CD4-positive, alpha-beta T cell (primary cell): ENCODE measurements at regions of chr22 and their contacts with region 1.

Region 1: GRCh38 chr22:50341977-50342650 is 1.0 kb upstream of the PPP6R2 start:
- DNase-seq: peak; percentile 80 to 94 (median 87)
- ATAC-seq: peak; percentile 53
- H3K4me3 ChIP-seq: peak overlapping the region; percentile 62
- H3K4me3 Mint-ChIP-seq: peak overlapping the region; percentile 88
- H3K27ac ChIP-seq: peak overlapping the region; percentile 84 to 85
- H3K27ac Mint-ChIP-seq: peak overlapping the region; percentile 98
- H3K4me1 ChIP-seq: peaks cover 27% of the 10 kb centered on the region
- H3K4me1 Mint-ChIP-seq: peaks cover 7% of the 10 kb centered on the region
- H3K27me3 ChIP-seq: no peaks in the 10 kb centered on the region
- H3K27me3 Mint-ChIP-seq: no peaks in the 10 kb centered on the region
- CTCF ChIP-seq: peak; percentile 95

Region 2: DNA sequence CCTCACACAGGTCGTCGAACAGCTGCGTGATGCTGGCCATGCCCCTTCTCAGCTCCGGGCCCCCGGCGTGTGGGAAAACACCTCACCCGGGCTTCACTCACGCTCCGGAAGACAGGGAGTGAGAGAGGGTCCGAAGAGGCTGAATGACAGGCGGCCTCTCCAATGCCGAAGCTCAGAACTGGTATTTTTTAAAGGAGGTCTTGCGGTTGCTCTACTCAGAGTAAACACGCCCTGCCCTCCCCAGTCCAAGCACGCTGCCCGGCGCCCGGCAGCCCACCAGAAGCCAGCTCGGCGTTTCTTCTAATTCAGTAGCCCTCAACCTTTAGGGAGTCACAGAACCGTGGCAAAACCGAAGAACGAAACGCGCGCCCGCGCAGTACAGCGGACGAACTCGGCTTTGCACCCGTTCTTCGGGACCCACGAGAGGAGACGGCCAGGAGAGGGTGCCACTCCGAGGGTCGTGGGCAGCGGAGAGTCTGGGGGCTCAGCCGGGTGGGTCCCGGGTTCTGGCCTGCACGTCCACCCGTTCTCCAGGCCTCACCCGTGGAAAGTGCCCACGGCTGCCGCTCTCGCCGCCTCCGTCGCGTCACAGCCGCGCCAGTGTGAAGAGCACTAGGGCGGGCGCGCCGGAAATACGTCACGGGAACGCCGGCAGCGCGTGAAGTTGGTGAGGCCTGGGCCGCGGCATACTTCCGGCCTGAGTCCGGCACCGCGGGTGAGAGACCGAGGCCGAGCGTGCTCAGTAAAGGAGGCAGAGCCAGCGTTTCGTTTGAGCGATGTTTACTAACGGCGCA is 97.5 kb before region 1 on chr22 and contains the start of gene TUBGCP6:
- CTCF ChIA-PET with region 1: interaction called, 16 read pairs
- POLR2A ChIA-PET with region 1: interaction called, 9 read pairs
- intact Hi-C with region 1: loop called in 1 of 2 experiments (anchors 1 kb)
- DNase-seq: peak; percentile 76 to 97 (median 90)
- ATAC-seq: peak; percentile 73
- H3K4me3 ChIP-seq: peak within 1 kb of the TSS; percentile 100
- H3K4me3 Mint-ChIP-seq: peak within 1 kb of the TSS; percentile 99
- H3K27ac ChIP-seq: peak within 1 kb of the TSS; percentile 98
- H3K27ac Mint-ChIP-seq: peak within 1 kb of the TSS; percentile 89
- H3K4me1 ChIP-seq: peaks cover 92% of the 10 kb centered on the region
- H3K4me1 Mint-ChIP-seq: peaks cover 47% of the 10 kb centered on the region
- H3K27me3 ChIP-seq: no peaks in the 10 kb centered on the region
- H3K27me3 Mint-ChIP-seq: no peaks in the 10 kb centered on the region
- CTCF ChIP-seq: peak; percentile 33
- total RNA-seq, gene TUBGCP6: 124 to 126 TPM

Region 3: DNA sequence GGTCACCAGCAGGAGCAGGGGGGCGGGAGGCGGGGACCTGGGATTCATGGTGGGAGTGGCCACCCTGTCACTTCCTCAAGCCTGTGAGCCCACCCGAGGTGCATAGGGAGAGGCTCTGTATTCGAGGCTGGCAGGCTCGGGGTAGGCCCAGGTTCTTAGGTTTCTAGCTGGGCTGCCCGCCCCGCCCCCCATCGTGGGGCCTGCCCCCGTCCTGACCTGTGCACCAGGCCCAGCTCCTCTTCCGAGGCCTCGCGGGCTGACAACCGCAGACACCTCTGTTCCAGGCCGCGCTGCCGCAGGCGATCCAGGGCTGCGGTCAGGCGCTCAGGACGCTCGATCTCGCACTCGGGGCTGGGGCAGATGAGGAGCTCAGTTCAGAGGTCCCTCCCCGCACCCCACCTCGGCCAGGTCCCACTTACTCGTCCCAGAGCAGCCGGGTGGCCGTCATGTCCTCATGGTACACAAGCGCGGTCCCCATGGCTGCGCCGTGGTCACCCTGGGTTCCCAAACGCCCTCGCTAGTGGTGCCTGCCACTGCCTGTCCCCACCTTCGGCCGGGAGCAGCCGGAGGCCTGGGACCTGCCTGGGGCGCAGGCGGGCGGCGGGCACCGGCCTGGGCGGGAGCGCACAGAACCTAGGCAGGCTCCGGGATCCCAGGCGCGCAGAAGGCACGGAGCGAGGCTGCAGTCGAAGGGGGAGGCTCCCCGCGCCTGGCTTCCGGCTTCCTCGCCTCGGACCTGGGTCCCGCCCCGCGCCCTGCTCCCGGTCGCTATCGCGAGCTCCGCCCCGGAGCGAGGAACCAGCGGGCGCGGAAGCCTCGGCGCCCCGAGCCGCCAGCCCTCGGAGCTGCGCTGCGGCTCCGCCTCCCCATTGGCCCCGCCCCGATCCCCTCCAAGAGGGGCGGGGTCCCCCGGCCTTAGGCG is 91.3 kb before region 1 on chr22 and contains the start of gene HDAC10:
- CTCF ChIA-PET with region 1: interaction called, 16 read pairs
- POLR2A ChIA-PET with region 1: interaction called, 12 read pairs
- intact Hi-C with region 1: loop called in 1 of 2 experiments (anchors 2 kb)
- DNase-seq: peak; percentile 60 to 91 (median 77)
- ATAC-seq: peak; percentile 79
- H3K4me3 ChIP-seq: peak within 1 kb of the TSS; percentile 87
- H3K4me3 Mint-ChIP-seq: peak within 1 kb of the TSS; percentile 84
- H3K27ac ChIP-seq: peak within 1 kb of the TSS in 1 of 2 donors; percentile 53
- H3K27ac Mint-ChIP-seq: peak within 1 kb of the TSS; percentile 55
- H3K4me1 ChIP-seq: peaks cover 57% of the 10 kb centered on the region
- H3K4me1 Mint-ChIP-seq: peaks cover 26% of the 10 kb centered on the region
- H3K27me3 ChIP-seq: no peaks in the 10 kb centered on the region
- H3K27me3 Mint-ChIP-seq: no peaks in the 10 kb centered on the region
- CTCF ChIP-seq: no peak
- total RNA-seq, gene HDAC10: 87.3 to 88.7 TPM

Region 4: GRCh38 chr22:50326959-50327710 is 15.0 kb before region 1 on chr22 and contains the start of gene DENND6B:
- CTCF ChIA-PET with region 1: interaction called, 18 read pairs
- POLR2A ChIA-PET with region 1: interaction called, 6 read pairs
- intact Hi-C with region 1: loop called in 1 of 2 experiments (anchors 2 kb)
- DNase-seq: peak; percentile 38 to 90 (median 62)
- ATAC-seq: peak; percentile 94
- H3K4me3 ChIP-seq: peak within 1 kb of the TSS; percentile 60
- H3K4me3 Mint-ChIP-seq: peak within 1 kb of the TSS; percentile 89
- H3K27ac ChIP-seq: no peak within 1 kb of the TSS
- H3K27ac Mint-ChIP-seq: peak within 1 kb of the TSS; percentile 35
- H3K4me1 ChIP-seq: peaks cover 15% of the 10 kb centered on the region
- H3K4me1 Mint-ChIP-seq: peaks cover 12% of the 10 kb centered on the region
- H3K27me3 ChIP-seq: no peaks in the 10 kb centered on the region
- H3K27me3 Mint-ChIP-seq: no peaks in the 10 kb centered on the region
- CTCF ChIP-seq: peak; percentile 30
- total RNA-seq, gene DENND6B: 1.8 to 1.9 TPM